ENCODE measurements at regions of chr6 and their contacts with region 1.

Region 1: GRCh38 chr6:31366693-31367470 is 9.9 kb upstream of the HLA-B start:
- DNase-seq: peak; percentile 82 to 97 (median 92)
- ATAC-seq: peak; percentile 100
- H3K4me3 ChIP-seq: peak overlapping the region in 1 of 2 donors; percentile 26
- H3K27ac ChIP-seq: no peak overlapping the region
- H3K4me1 ChIP-seq: peaks cover 0 to 13% of the 10 kb centered on the region in 2 donors
- H3K27me3 ChIP-seq: peaks cover 0 to 16% of the 10 kb centered on the region in 2 donors
- CTCF ChIP-seq: peak; percentile 83 to 96

Region 2: GRCh38 chr6:31197559-31198305 is 169.2 kb before region 1 on chr6:
- intact Hi-C with region 1: loop called in 1 of 2 experiments (anchors 2 kb)
- DNase-seq: peak; percentile 82 to 96 (median 91)
- ATAC-seq: peak; percentile 89
- H3K4me3 ChIP-seq: peak overlapping the region; percentile 51 to 68
- H3K27ac ChIP-seq: peak overlapping the region; percentile 98 to 100
- H3K4me1 ChIP-seq: peaks cover 0 to 76% of the 10 kb centered on the region in 2 donors
- H3K27me3 ChIP-seq: no peaks in the 10 kb centered on the region
- CTCF ChIP-seq: no peak

Region 3: GRCh38 chr6:31559958-31560696 is 193.2 kb after region 1 on chr6:
- intact Hi-C with region 1: no loop called
- DNase-seq: peak in 3 of 4 donors; percentile 46 to 89 (median 74)
- ATAC-seq: peak; percentile 72
- H3K4me3 ChIP-seq: peak overlapping the region in 1 of 2 donors; percentile 26
- H3K27ac ChIP-seq: peak overlapping the region; percentile 70 to 95
- H3K4me1 ChIP-seq: peaks cover 7 to 78% of the 10 kb centered on the region in 2 donors
- H3K27me3 ChIP-seq: no peaks in the 10 kb centered on the region
- CTCF ChIP-seq: no peak